Activated B cell treated with CpG ODN at 0.5 μM for 24 hours (primary cell): ENCODE measurements at regions of chr3 and their contacts with region 1.

Region 1: DNA sequence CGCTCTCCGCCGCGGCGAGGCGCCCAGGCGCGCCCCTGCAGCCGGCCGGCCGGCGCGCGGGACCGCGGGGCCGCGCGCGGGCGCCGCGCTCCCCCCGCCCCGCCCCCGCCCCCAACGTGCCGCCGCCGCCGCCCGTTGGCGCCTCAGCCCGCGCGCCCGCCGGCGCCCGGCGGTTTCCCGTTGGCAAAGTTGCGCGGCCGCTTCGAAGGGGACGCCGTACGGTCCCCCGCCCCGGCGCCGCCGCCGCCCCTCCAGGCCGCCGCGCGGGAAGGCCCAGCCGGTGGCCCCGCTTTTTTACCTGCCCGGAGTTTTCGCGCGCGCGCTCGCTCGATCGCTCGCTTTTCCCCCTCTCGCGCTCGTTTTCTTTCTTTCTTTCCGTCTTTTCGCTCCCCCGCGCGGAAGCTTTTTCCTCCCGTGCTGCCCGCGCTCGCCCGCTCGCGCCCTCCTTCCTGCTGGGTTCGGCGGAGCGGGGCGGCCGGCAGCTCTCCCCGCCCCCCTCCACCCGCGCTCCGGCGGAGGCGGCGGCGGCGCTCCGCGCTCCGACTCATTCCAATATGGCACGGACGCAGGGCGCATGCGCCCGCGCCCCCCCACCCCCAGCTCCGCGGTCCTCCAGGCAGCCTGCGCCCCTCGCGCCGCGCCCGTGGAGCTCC is at the start of gene SFMBT1:
- DNase-seq: peak; percentile 74
- ATAC-seq: peak; percentile 57
- H3K4me3 Mint-ChIP-seq: peak within 1 kb of the TSS; percentile 95
- H3K27ac Mint-ChIP-seq: peak within 1 kb of the TSS; percentile 97
- H3K4me1 Mint-ChIP-seq: peaks cover 31% of the 10 kb centered on the region
- H3K27me3 Mint-ChIP-seq: no peaks in the 10 kb centered on the region
- CTCF ChIP-seq: no peak
- total RNA-seq, gene SFMBT1: 24.6 and 31.6 TPM in 2 replicates

Region 2: GRCh38 chr3:52536369-52537164 is 509.1 kb before region 1 on chr3 and contains the start of gene UQCC5:
- CTCF ChIA-PET with region 1: no interaction called
- POLR2A ChIA-PET with region 1: no interaction called
- intact Hi-C with region 1: loop called (anchors 10 kb)
- DNase-seq: peak; percentile 92
- ATAC-seq: peak; percentile 87
- H3K4me3 Mint-ChIP-seq: peak within 1 kb of the TSS; percentile 98
- H3K27ac Mint-ChIP-seq: peak within 1 kb of the TSS; percentile 96
- H3K4me1 Mint-ChIP-seq: peaks cover 42% of the 10 kb centered on the region
- H3K27me3 Mint-ChIP-seq: no peaks in the 10 kb centered on the region
- CTCF ChIP-seq: no peak
- total RNA-seq, gene UQCC5: 11.7 and 13.6 TPM in 2 replicates

Region 3: GRCh38 chr3:52770496-52771333 is 274.9 kb before region 1 on chr3 and contains the start of gene NEK4:
- CTCF ChIA-PET with region 1: no interaction called
- POLR2A ChIA-PET with region 1: interaction called, 7 read pairs
- intact Hi-C with region 1: loop called (anchors 2 kb)
- DNase-seq: peak; percentile 80
- ATAC-seq: peak; percentile 95
- H3K4me3 Mint-ChIP-seq: peak within 1 kb of the TSS; percentile 94
- H3K27ac Mint-ChIP-seq: peak within 1 kb of the TSS; percentile 95
- H3K4me1 Mint-ChIP-seq: peaks cover 17% of the 10 kb centered on the region
- H3K27me3 Mint-ChIP-seq: no peaks in the 10 kb centered on the region
- CTCF ChIP-seq: no peak
- total RNA-seq, gene NEK4: 23.0 and 24.5 TPM in 2 replicates

Region 4: DNA sequence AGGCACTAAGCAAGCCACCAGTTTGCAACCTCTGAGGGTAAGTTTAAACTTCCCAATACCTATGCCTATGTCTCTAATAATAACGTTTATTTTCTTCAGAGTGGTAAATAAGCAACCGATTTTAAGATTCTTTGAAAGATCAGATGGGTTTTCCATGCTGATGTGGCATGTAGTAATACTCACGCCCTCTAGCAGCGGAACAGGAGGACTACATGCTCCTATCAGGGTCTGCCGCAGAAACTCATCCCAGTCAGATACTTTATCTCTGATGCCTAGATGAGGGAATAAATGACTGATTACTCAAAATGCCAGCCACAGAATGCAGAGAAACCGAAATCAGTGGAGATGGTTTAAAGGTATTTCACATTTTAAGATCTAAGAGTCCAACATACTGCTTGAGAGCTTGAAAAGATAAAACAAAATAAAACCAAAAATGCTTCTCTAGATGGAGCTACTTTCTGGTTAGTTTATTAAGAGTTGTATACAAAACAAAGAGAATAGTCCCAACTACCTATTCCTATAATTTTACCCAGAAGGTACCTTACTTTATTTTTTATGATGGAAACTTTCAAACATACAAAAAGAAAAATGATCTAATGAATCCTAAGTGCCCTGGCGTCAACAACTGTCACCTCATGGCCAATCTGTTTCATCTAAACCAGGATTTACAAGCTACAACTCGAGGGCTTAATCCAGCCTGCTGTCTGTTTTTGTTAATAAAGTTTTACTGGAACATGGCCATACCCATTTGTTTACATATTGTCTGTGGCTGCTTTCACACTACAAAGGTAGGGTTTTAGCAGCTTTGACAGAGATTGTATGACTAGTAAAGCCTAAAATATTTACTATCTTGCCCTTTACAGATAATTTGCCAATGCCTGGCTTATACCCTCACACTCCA is 110.8 kb before region 1 on chr3:
- CTCF ChIA-PET with region 1: interaction called, 9 read pairs
- POLR2A ChIA-PET with region 1: interaction called, 10 read pairs
- intact Hi-C with region 1: loop called (anchors 1 kb)
- DNase-seq: no peak
- ATAC-seq: peak; percentile 87
- H3K4me3 Mint-ChIP-seq: no peak overlapping the region
- H3K27ac Mint-ChIP-seq: peak overlapping the region; percentile 22
- H3K4me1 Mint-ChIP-seq: peaks cover 25% of the 10 kb centered on the region
- H3K27me3 Mint-ChIP-seq: no peaks in the 10 kb centered on the region
- CTCF ChIP-seq: peak; percentile 58

Region 5: GRCh38 chr3:53009826-53010539 is 35.7 kb before region 1 on chr3:
- CTCF ChIA-PET with region 1: no interaction called
- POLR2A ChIA-PET with region 1: no interaction called
- intact Hi-C with region 1: loop called (anchors 5 kb)
- DNase-seq: no peak
- ATAC-seq: no peak
- H3K4me3 Mint-ChIP-seq: no peak overlapping the region
- H3K27ac Mint-ChIP-seq: no peak overlapping the region
- H3K4me1 Mint-ChIP-seq: peaks cover 36% of the 10 kb centered on the region
- H3K27me3 Mint-ChIP-seq: no peaks in the 10 kb centered on the region
- CTCF ChIP-seq: no peak

Region 6: DNA sequence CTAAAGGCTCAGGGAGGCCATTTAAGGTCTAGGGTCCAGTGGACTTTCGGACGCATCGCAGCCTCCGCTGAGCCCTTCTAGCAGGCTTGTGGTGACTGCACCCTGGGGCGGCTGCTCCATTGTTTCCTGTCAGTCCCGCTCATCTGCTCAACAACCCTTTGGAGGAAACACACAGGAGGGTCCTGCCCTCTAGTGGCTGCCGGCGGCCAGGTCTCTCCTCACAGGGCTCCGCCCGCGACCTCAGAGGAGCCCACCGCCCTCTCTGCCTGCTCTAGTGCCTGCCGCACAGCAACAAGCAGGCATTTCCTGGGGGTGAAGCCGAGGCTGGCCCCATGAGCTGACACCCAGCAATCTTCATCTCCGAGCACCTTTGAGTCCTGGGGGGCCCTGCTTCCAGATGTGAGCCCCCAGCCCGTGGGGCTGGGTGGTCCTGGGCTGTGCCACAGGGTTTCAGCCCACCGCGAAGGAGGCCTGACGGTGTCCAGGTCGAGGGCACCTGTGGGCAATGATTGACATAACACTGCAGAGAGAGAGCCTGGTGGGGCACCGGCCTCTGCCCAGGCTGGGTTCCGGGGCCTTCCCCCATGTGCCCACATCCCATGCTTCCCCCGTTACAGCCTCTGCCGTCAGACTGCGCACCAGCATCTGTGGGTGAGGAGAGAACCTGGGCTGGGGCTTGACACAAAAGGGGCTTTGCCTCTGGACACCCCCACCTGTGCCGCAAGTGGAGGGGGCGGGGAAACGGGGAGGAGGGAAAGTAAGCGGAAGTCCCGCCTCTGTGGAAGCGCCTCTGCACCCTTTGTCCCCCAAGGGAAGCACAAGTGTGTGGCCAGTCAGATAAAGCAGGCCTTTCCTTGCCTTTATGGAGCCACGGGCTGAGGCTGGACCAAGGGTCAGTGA is 27.3 kb after region 1 on chr3:
- CTCF ChIA-PET with region 1: no interaction called
- POLR2A ChIA-PET with region 1: interaction called, 5 read pairs
- intact Hi-C with region 1: loop called (anchors 1 kb)
- DNase-seq: peak; percentile 76
- ATAC-seq: peak; percentile 94
- H3K4me3 Mint-ChIP-seq: peak overlapping the region; percentile 92
- H3K27ac Mint-ChIP-seq: peak overlapping the region; percentile 89
- H3K4me1 Mint-ChIP-seq: peaks cover 13% of the 10 kb centered on the region
- H3K27me3 Mint-ChIP-seq: no peaks in the 10 kb centered on the region
- CTCF ChIP-seq: peak; percentile 39

Region 7: DNA sequence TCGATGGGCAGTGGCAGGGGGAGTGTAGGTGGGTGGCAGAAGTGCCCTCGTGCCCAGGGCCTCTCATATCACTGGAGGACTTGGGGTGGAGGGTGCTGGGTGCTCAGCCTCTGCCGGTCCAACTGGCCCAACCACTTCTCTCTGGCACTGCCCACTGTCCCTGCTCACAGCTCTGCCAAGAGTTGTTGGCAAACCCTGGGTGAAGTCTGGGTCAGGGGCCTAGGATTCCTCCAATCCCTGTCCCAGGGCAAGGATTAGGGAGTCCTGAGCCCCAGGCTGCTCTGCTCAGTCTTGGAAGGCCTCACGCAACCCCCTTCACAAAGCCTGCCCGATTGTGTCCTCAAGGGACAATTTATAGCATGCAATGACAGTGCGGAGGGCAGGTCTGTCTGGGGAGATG is 110.1 kb after region 1 on chr3:
- CTCF ChIA-PET with region 1: no interaction called
- POLR2A ChIA-PET with region 1: no interaction called
- intact Hi-C with region 1: no loop called
- DNase-seq: no peak
- ATAC-seq: no peak
- H3K4me3 Mint-ChIP-seq: no peak overlapping the region
- H3K27ac Mint-ChIP-seq: no peak overlapping the region
- H3K4me1 Mint-ChIP-seq: peaks cover 28% of the 10 kb centered on the region
- H3K27me3 Mint-ChIP-seq: peaks cover 19% of the 10 kb centered on the region
- CTCF ChIP-seq: no peak